Activated CD4-positive, alpha-beta memory T cell treated with anti-CD3 and anti-CD28 coated beads for 36 hours (primary cell): ENCODE measurements at regions of chr9 and their contacts with region 1.

Region 1: GRCh38 chr9:69759421-69760277 is at the start of gene PTAR1:
- DNase-seq: peak; percentile 93
- H3K4me3 Mint-ChIP-seq: peak within 1 kb of the TSS; percentile 92
- H3K27ac Mint-ChIP-seq: peak within 1 kb of the TSS; percentile 89
- H3K4me1 Mint-ChIP-seq: peaks cover 27% of the 10 kb centered on the region
- H3K27me3 Mint-ChIP-seq: no peaks in the 10 kb centered on the region
- total RNA-seq, gene PTAR1: 37.0 to 37.3 TPM

Region 2: GRCh38 chr9:69719983-69720382 is 39.7 kb before region 1 on chr9:
- CTCF ChIA-PET with region 1: no interaction called
- POLR2A ChIA-PET with region 1: no interaction called
- intact Hi-C with region 1: loop called (anchors 2 kb)
- DNase-seq: no peak
- H3K4me3 Mint-ChIP-seq: no peak overlapping the region
- H3K27ac Mint-ChIP-seq: no peak overlapping the region
- H3K4me1 Mint-ChIP-seq: no peaks in the 10 kb centered on the region
- H3K27me3 Mint-ChIP-seq: no peaks in the 10 kb centered on the region

Region 3: DNA sequence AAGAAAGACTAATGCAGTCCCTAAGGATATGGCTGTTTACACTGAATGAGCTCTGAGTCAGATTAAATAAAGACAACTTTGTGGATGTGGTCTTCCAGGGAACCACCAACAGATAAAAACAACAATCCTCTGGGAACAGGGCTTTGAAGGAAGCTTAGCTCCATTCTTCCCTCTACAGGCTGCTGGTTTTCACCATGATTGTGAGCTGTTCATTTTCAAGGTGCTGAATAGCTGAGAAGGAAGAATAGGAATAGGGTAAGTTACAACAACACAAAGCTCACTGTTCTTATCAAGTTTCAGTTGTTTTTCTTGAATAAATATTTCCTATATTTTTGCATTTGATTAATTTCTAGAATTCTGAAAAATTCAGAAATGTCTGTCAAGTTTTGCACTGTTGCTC is 26.1 kb after region 1 on chr9:
- CTCF ChIA-PET with region 1: no interaction called
- POLR2A ChIA-PET with region 1: no interaction called
- intact Hi-C with region 1: no loop called
- DNase-seq: no peak
- H3K4me3 Mint-ChIP-seq: no peak overlapping the region
- H3K27ac Mint-ChIP-seq: no peak overlapping the region
- H3K4me1 Mint-ChIP-seq: no peaks in the 10 kb centered on the region
- H3K27me3 Mint-ChIP-seq: peaks cover 15% of the 10 kb centered on the region

Region 4: GRCh38 chr9:69822091-69822750 is 62.6 kb after region 1 on chr9:
- CTCF ChIA-PET with region 1: no interaction called
- POLR2A ChIA-PET with region 1: no interaction called
- intact Hi-C with region 1: loop called (anchors 1 kb)
- DNase-seq: no peak
- H3K4me3 Mint-ChIP-seq: no peak overlapping the region
- H3K27ac Mint-ChIP-seq: no peak overlapping the region
- H3K4me1 Mint-ChIP-seq: peaks cover 10% of the 10 kb centered on the region
- H3K27me3 Mint-ChIP-seq: peaks cover 29% of the 10 kb centered on the region

Region 5: DNA sequence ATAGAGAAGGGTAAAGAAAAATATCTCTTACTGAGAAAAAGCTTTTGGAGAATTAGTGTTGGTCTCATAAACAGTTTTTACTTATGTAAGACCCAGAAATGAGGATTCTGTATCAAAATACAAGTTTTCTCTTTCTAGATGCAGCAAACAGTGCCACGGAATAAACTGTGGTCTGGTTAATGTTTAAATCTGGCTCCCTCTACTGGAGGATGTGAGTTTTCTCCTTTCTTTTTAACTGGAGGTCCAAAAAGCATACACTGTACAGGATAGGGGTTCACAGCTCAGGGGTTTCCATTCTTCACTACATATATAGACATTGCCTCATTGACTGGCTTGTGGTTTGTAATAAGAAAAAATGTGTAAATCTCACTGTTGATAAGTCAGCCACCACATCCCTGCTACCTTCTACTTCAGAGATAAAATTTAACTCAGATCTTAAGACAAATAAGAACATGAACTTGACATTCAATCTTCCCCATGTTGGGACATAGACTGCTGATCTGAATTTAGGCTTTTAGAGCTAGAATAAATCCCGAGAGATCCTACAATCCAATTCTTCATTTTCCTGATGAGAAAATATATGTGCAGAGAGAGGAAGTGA is 159.9 kb after region 1 on chr9:
- CTCF ChIA-PET with region 1: no interaction called
- POLR2A ChIA-PET with region 1: no interaction called
- intact Hi-C with region 1: loop called (anchors 1 kb)
- DNase-seq: no peak
- H3K4me3 Mint-ChIP-seq: no peak overlapping the region
- H3K27ac Mint-ChIP-seq: no peak overlapping the region
- H3K4me1 Mint-ChIP-seq: no peaks in the 10 kb centered on the region
- H3K27me3 Mint-ChIP-seq: peaks cover 3% of the 10 kb centered on the region